ENCODE measurements at regions of chr16 and their contacts with region 1.

Region 1: GRCh38 chr16:79661578-79661977 is 61.0 kb upstream of the MAF start:
- DNase-seq: no peak
- ATAC-seq: no peak
- H3K4me3 ChIP-seq: no peak overlapping the region
- H3K27ac ChIP-seq: no peak overlapping the region
- H3K4me1 ChIP-seq: peaks cover 0 to 6% (median 0%) of the 10 kb centered on the region in 12 donors
- H3K27me3 ChIP-seq: no peaks in the 10 kb centered on the region
- CTCF ChIP-seq: no peak
- POLR2A ChIP-seq: no peak

Region 2: GRCh38 chr16:79613009-79613408 is 48.6 kb before region 1 on chr16:
- intact Hi-C with region 1: loop called in 1 of 10 experiments (anchors 2 kb)
- DNase-seq: no peak
- ATAC-seq: no peak
- H3K4me3 ChIP-seq: no peak overlapping the region
- H3K27ac ChIP-seq: no peak overlapping the region
- H3K4me1 ChIP-seq: no peaks in the 10 kb centered on the region
- H3K27me3 ChIP-seq: peaks cover 0 to 32% (median 0%) of the 10 kb centered on the region in 9 donors
- CTCF ChIP-seq: no peak
- POLR2A ChIP-seq: no peak

Measured in heart left ventricle (tissue), 16 donors.